Colonic mucosa (tissue), 4 donors: ENCODE measurements at regions of chr22 and their contacts with region 1.

Region 1: GRCh38 chr22:37166675-37167066 is 17.0 kb upstream of the IL2RB start:
- DNase-seq: peak; percentile 91
- H3K4me3 ChIP-seq: peak overlapping the region; percentile 12
- H3K27ac ChIP-seq: peak overlapping the region; percentile 64
- H3K4me1 ChIP-seq: peaks cover 5% of the 10 kb centered on the region
- H3K27me3 ChIP-seq: no peaks in the 10 kb centered on the region
- CTCF ChIP-seq: peak; percentile 93

Region 2: GRCh38 chr22:37077884-37078485 is 88.7 kb before region 1 on chr22:
- intact Hi-C with region 1: loop called (anchors 5 kb)
- DNase-seq: peak; percentile 73
- H3K4me3 ChIP-seq: no peak overlapping the region
- H3K27ac ChIP-seq: no peak overlapping the region
- H3K4me1 ChIP-seq: no peaks in the 10 kb centered on the region
- H3K27me3 ChIP-seq: no peaks in the 10 kb centered on the region
- CTCF ChIP-seq: peak; percentile 98

Region 3: GRCh38 chr22:37199103-37199759 is 32.6 kb after region 1 on chr22:
- intact Hi-C with region 1: loop called (anchors 1 kb)
- DNase-seq: peak; percentile 99
- H3K4me3 ChIP-seq: peak overlapping the region; percentile 43
- H3K27ac ChIP-seq: peak overlapping the region; percentile 82
- H3K4me1 ChIP-seq: peaks cover 24% of the 10 kb centered on the region
- H3K27me3 ChIP-seq: no peaks in the 10 kb centered on the region
- CTCF ChIP-seq: peak; percentile 90

Region 4: DNA sequence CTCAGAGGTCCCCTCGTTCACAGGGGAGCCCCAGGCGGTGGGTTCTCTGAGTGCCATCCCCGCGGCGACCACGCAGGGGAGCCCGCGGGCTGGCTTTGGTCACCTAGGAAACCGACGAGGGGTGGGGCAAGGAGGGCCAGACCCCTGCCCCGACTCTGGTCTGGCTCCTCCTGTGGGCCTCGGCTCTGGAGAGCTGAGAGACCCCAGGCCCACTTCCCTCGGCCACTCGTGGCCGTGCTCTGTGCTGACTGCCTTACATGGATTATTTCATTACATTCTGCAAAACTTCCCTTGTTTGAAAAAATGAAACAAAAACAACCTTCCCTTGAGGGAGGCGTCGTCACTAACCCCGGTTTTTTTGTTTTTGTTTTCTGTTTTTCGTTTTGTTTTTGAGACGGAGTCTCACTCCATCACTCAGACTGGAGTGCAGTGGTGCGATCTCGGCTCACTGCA is 100.5 kb after region 1 on chr22:
- intact Hi-C with region 1: loop called (anchors 10 kb)
- DNase-seq: peak; percentile 50
- H3K4me3 ChIP-seq: peak overlapping the region; percentile 32
- H3K27ac ChIP-seq: peak overlapping the region; percentile 11
- H3K4me1 ChIP-seq: no peaks in the 10 kb centered on the region
- H3K27me3 ChIP-seq: no peaks in the 10 kb centered on the region
- CTCF ChIP-seq: peak; percentile 75